BJ (cell line): ENCODE measurements at regions of chr22 and their contacts with region 1.

Region 1: DNA sequence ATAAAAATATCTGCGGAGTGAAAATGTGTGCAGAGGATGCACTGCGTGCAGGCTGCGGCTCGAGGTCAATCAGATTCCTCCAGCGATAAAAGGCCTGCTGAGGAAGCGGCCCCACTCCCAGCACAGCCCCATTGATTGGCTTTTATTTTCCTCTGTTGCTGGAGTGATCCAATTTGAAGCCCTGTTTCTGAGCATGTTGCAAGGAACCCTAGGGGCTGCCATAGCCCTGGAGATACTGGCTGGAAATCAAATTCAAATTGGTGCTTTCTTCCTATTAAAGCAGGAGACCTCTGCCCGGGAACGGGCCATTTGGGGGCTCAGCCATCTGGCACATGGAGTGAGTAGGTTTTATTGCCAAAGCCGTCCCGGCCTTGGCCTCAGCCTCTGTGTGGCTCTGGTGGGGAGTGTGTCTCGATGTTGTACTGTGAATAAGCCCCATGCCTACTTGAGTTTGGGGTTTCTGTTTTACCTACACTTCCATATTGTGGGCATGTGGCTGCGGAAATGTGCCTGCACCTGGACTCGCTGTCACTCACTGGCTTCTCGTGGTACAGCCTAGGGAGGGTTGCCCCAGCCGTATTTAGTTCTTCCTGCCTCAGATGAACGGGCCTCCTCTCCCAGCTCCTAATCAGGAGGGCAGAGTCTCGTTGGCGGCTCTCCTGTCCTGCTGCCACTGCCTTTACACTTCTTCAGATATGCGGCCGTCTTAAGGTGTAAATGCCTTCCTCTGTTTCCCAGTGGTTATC is 25.6 kb downstream of the PARVB start:
- DNase-seq: no peak
- H3K4me3 ChIP-seq: no peak overlapping the region
- H3K27me3 ChIP-seq: no peaks in the 10 kb centered on the region
- CTCF ChIP-seq: no peak

Region 2: GRCh38 chr22:44523981-44524759 is 474.5 kb after region 1 on chr22:
- CTCF ChIA-PET with region 1: no interaction called
- POLR2A ChIA-PET with region 1: interaction called, 15 read pairs
- DNase-seq: peak; percentile 87
- H3K4me3 ChIP-seq: no peak overlapping the region
- H3K27me3 ChIP-seq: no peaks in the 10 kb centered on the region
- CTCF ChIP-seq: no peak